Heart left ventricle (tissue), 16 donors: ENCODE measurements at regions of chr1 and their contacts with region 1.

Region 1: GRCh38 chr1:159612211-159612885 is 24.7 kb downstream of the APCS start:
- DNase-seq: no peak
- ATAC-seq: no peak
- H3K4me3 ChIP-seq: no peak overlapping the region
- H3K27ac ChIP-seq: no peak overlapping the region
- H3K4me1 ChIP-seq: no peaks in the 10 kb centered on the region
- H3K27me3 ChIP-seq: no peaks in the 10 kb centered on the region
- CTCF ChIP-seq: no peak
- POLR2A ChIP-seq: no peak

Region 2: DNA sequence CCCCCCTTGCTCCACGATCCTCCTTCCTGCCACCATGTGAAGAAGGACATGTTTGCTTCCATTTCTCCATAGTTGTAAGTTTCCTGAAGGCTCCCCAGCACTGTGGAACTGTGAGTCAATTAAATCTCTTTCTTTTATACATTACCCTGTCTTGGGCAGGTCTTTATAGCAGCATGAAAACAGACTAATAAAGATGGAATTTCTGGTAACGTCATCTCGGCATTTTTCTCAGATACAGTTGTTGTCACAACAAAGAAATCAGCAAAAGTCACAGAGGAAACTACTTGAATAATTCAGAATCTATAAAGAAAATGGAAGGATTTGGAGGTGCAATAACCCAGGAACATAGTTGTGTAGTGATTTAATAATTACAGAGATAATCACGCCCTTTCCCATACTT is 20.4 kb before region 1 on chr1:
- intact Hi-C with region 1: loop called in 1 of 10 experiments (anchors 2 kb)
- DNase-seq: no peak
- ATAC-seq: no peak
- H3K4me3 ChIP-seq: no peak overlapping the region
- H3K27ac ChIP-seq: no peak overlapping the region
- H3K4me1 ChIP-seq: peaks cover 0 to 6% (median 0%) of the 10 kb centered on the region in 12 donors
- H3K27me3 ChIP-seq: no peaks in the 10 kb centered on the region
- CTCF ChIP-seq: no peak
- POLR2A ChIP-seq: no peak

Region 3: DNA sequence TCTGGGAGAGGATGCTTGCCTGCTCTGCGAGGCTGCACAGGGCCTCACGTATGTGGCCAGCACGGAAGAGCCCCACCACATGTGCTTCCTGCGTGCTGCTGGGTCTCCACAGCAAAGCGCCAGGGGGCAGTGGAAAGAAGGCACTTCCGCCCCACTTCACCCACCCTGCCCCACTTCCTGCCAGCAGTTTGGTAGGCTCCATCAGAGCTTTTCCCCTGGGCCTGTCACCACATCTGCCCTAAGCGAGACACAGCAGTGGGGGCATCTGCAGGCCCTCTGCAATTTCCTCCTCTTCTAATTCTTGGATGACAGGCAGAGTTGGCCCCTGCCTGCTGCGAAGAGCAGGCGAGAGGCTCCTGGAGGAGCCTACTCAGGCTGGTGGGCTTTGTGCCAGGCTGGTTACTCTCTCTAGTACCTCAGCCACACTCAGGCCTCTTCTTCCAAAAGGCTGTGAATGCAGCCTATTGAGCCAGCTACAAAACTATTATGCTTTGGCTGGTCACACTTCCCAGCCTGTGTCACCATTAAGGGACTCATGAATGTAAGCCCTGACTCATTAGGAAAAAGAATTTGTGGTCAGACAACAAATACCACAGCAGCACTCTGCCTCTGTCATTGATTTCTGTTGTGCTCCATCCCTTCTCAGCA is 1225.3 kb after region 1 on chr1:
- intact Hi-C with region 1: no loop called
- DNase-seq: peak; percentile 18 to 82 (median 35)
- ATAC-seq: peak in 2 of 4 donors; percentile 48 to 77
- H3K4me3 ChIP-seq: no peak overlapping the region
- H3K27ac ChIP-seq: peak overlapping the region in 2 of 12 donors; percentile 7 to 80
- H3K4me1 ChIP-seq: peaks cover 0 to 38% (median 0%) of the 10 kb centered on the region in 12 donors
- H3K27me3 ChIP-seq: peaks cover 0 to 4% (median 0%) of the 10 kb centered on the region in 9 donors
- CTCF ChIP-seq: peak in 1 of 12 donors; percentile 17
- POLR2A ChIP-seq: no peak